CD4-positive, alpha-beta memory T cell (primary cell): ENCODE measurements at regions of chr6 and their contacts with region 1.

Region 1: GRCh38 chr6:80106418-80107235 is at the start of gene BCKDHB:
- DNase-seq: peak; percentile 98 to 99 (median 98)
- H3K4me3 ChIP-seq: peak within 1 kb of the TSS; percentile 52 to 54
- H3K4me3 Mint-ChIP-seq: peak within 1 kb of the TSS; percentile 87 to 95 (median 92)
- H3K27ac ChIP-seq: peak within 1 kb of the TSS; percentile 50
- H3K27ac Mint-ChIP-seq: peak within 1 kb of the TSS; percentile 76 to 95 (median 92)
- H3K4me1 ChIP-seq: peaks cover 16% of the 10 kb centered on the region
- H3K4me1 Mint-ChIP-seq: peaks cover 12 to 22% (median 18%) of the 10 kb centered on the region in 4 donors
- H3K27me3 ChIP-seq: no peaks in the 10 kb centered on the region
- H3K27me3 Mint-ChIP-seq: peaks cover 1 to 3% of the 10 kb centered on the region in 2 donors
- total RNA-seq, gene BCKDHB: 11.8 to 16.0 TPM

Region 2: GRCh38 chr6:79536954-79537747 is 569.5 kb before region 1 on chr6 and contains the start of gene LCA5:
- CTCF ChIA-PET with region 1: no interaction called
- POLR2A ChIA-PET with region 1: no interaction called
- intact Hi-C with region 1: loop called (anchors 5 kb)
- DNase-seq: peak; percentile 73 to 85 (median 84)
- H3K4me3 ChIP-seq: peak within 1 kb of the TSS; percentile 25 to 44
- H3K4me3 Mint-ChIP-seq: no peak within 1 kb of the TSS
- H3K27ac ChIP-seq: no peak within 1 kb of the TSS
- H3K27ac Mint-ChIP-seq: no peak within 1 kb of the TSS
- H3K4me1 ChIP-seq: peaks cover 14% of the 10 kb centered on the region
- H3K4me1 Mint-ChIP-seq: peaks cover 0 to 4% (median under 1%) of the 10 kb centered on the region in 4 donors
- H3K27me3 ChIP-seq: no peaks in the 10 kb centered on the region
- H3K27me3 Mint-ChIP-seq: peaks cover 11 to 18% of the 10 kb centered on the region in 2 donors
- total RNA-seq, gene LCA5: 0.22 to 0.23 TPM

Region 3: DNA sequence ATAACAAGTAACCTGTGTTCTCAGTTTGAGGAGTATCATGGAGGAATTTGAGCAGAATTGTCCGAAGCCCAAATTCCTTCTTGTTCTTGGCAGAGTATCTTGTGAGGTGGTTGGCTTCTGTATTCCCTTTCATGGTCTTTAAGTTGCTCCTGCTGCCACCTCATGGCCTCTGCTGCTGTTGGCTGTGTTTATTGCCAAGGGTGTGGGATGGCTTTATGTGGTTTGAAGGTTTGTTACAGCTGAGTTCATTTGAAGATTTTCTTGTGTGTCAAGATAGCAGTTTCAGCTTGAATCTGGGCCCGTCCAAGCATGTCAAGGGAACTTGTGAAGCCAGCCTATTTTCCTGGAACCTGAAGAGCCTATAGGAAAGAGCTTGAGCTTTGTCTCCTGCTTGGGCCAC is 122.4 kb before region 1 on chr6:
- CTCF ChIA-PET with region 1: no interaction called
- POLR2A ChIA-PET with region 1: no interaction called
- intact Hi-C with region 1: no loop called
- DNase-seq: peak; percentile 28 to 50 (median 43)
- H3K4me3 ChIP-seq: no peak overlapping the region
- H3K4me3 Mint-ChIP-seq: peak overlapping the region in 4 of 8 donors; percentile 5 to 33 (median 20)
- H3K27ac ChIP-seq: no peak overlapping the region
- H3K27ac Mint-ChIP-seq: peak overlapping the region; percentile 3 to 69 (median 36)
- H3K4me1 ChIP-seq: peaks cover 25% of the 10 kb centered on the region
- H3K4me1 Mint-ChIP-seq: peaks cover 4 to 30% (median 14%) of the 10 kb centered on the region in 4 donors
- H3K27me3 ChIP-seq: no peaks in the 10 kb centered on the region
- H3K27me3 Mint-ChIP-seq: no peaks in the 10 kb centered on the region